CD4-positive, alpha-beta memory T cell (primary cell): ENCODE measurements at regions of chr7 and their contacts with region 1.

Region 1: GRCh38 chr7:85030893-85031292 is 156.0 kb downstream of the SEMA3D start:
- DNase-seq: no peak
- H3K4me3 ChIP-seq: no peak overlapping the region
- H3K4me3 Mint-ChIP-seq: no peak overlapping the region
- H3K27ac ChIP-seq: no peak overlapping the region
- H3K27ac Mint-ChIP-seq: no peak overlapping the region
- H3K4me1 ChIP-seq: no peaks in the 10 kb centered on the region
- H3K4me1 Mint-ChIP-seq: no peaks in the 10 kb centered on the region
- H3K27me3 ChIP-seq: no peaks in the 10 kb centered on the region
- H3K27me3 Mint-ChIP-seq: no peaks in the 10 kb centered on the region

Region 2: DNA sequence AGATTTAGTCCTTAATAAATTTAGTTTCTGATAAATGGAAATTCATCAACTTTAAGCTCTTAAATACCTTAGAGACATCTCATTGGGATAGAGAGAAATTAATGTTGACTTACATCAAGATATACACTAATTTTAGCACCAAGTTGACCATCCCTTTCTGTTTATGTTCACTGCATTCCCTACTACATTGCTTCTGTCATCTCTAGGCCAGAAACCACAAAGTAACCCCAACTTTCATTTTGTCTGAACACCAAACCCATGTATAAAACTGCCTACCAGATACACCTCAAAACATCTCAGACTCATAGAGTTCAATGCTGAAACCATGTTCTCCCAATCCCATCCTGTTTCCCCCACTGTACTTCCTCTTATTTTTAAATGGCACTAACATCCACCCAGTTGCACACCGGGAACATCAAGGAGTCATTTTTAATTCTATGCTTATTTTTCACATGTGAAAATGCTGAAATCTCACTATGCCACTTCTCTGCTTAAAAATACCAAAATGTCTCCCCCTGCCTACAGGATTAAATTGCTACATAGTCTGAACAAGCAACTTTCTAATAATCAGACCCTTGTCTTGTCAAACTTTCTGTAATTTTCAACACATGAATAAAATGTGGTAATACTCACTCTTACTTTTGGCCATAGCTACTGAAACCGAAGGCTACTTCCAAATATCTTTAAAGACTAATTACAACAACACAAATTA is 45.7 kb before region 1 on chr7:
- CTCF ChIA-PET with region 1: no interaction called
- POLR2A ChIA-PET with region 1: no interaction called
- intact Hi-C with region 1: no loop called
- DNase-seq: no peak
- H3K4me3 ChIP-seq: no peak overlapping the region
- H3K4me3 Mint-ChIP-seq: no peak overlapping the region
- H3K27ac ChIP-seq: no peak overlapping the region
- H3K27ac Mint-ChIP-seq: no peak overlapping the region
- H3K4me1 ChIP-seq: no peaks in the 10 kb centered on the region
- H3K4me1 Mint-ChIP-seq: no peaks in the 10 kb centered on the region
- H3K27me3 ChIP-seq: no peaks in the 10 kb centered on the region
- H3K27me3 Mint-ChIP-seq: no peaks in the 10 kb centered on the region

Region 3: DNA sequence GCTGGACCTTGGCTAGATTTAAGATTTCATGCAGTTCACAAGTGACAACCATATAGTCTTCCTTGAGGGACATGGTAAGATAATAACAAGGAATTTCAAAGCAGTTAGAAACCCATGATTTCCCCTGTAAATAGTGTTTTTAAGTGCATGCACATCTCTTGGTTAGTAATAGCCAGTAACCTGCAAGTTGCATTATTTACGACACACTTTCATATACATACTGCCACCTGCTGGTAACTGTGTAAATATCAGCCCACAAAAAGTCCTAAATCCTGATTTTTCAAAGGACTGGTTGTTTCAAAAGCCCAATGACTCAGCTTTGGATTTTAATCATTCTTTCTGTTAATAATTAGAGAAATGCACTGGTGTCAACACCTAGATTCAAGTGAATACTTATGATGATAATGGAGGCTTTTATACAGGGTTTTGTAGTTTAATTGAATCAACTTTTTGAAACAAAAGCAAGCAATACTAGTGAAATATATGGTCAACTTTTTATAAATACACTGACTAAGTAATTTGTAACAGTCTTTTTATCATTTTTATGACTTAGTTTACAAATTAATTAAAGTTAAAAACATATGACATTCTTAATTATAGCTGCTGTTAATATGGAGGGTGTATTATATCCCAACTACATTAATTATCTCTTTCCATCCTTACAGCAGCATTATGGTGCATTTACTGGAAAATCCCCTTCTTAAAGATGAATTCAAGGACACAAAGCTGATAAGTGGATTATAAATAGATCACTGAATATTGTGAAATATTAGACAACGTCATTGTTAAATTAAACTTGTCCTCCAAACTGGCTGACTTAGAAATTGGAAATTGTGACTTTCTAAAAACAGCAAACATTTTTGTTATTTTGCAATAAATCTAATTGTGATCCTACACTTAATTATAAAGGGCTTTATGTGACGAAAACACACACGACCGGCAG is 523.6 kb after region 1 on chr7:
- CTCF ChIA-PET with region 1: no interaction called
- POLR2A ChIA-PET with region 1: no interaction called
- intact Hi-C with region 1: loop called (anchors 5 kb)
- DNase-seq: peak in 2 of 5 donors; percentile 3 to 6
- H3K4me3 ChIP-seq: no peak overlapping the region
- H3K4me3 Mint-ChIP-seq: no peak overlapping the region
- H3K27ac ChIP-seq: no peak overlapping the region
- H3K27ac Mint-ChIP-seq: no peak overlapping the region
- H3K4me1 ChIP-seq: no peaks in the 10 kb centered on the region
- H3K4me1 Mint-ChIP-seq: no peaks in the 10 kb centered on the region
- H3K27me3 ChIP-seq: no peaks in the 10 kb centered on the region
- H3K27me3 Mint-ChIP-seq: no peaks in the 10 kb centered on the region